ENCODE measurements at regions of chrX and their contacts with region 1.

Region 1: DNA sequence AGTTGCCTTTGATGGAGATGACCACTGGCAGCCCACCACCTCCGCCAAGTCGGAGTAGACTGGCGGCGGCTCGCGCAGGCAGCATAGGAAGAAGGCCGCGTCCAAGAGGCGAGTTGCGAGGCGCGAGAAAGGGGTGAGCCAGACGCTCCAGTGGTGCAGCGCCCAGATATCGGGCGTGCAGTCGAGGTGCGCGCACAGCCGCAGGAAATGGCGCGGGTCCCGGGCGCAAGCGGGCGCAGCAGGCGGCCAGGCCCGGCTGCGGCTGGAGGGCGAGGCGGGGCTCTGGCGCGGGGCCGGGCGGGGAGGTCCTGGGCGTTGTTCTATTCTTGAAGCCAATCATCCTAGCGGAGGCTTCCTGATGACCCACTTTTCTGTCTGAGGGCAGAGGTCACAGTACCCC is 13.2 kb upstream of the PGRMC1 start:
- DNase-seq: no peak
- H3K4me3 Mint-ChIP-seq: no peak overlapping the region
- H3K27ac Mint-ChIP-seq: no peak overlapping the region
- H3K4me1 Mint-ChIP-seq: no peaks in the 10 kb centered on the region
- H3K27me3 Mint-ChIP-seq: peaks cover 61% of the 10 kb centered on the region
- CTCF ChIP-seq: no peak

Region 2: DNA sequence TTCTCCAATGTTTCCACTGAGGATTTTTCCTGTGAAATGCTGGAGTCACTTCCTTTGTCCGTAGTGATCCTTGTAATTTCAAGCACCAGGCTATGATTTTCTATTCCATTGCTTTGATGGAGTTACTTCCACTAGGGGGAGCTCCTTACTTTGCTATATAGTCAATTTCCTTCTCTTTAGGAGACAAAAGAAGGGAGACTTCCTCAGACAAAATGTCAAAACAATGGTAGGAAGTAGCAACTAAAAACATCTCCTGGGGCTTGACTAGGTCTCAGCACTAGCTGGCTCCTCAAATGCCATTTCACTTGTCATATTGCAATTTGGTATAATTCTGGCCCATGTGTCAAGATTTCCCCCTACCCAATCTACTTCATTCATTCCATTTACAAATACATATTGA is 375.3 kb before region 1 on chrX:
- CTCF ChIA-PET with region 1: interaction called, 8 read pairs
- POLR2A ChIA-PET with region 1: no interaction called
- intact Hi-C with region 1: loop called (anchors 2 kb)
- DNase-seq: peak; percentile 68
- H3K4me3 Mint-ChIP-seq: no peak overlapping the region
- H3K27ac Mint-ChIP-seq: no peak overlapping the region
- H3K4me1 Mint-ChIP-seq: no peaks in the 10 kb centered on the region
- H3K27me3 Mint-ChIP-seq: peaks cover 36% of the 10 kb centered on the region
- CTCF ChIP-seq: peak; percentile 55

Region 3: DNA sequence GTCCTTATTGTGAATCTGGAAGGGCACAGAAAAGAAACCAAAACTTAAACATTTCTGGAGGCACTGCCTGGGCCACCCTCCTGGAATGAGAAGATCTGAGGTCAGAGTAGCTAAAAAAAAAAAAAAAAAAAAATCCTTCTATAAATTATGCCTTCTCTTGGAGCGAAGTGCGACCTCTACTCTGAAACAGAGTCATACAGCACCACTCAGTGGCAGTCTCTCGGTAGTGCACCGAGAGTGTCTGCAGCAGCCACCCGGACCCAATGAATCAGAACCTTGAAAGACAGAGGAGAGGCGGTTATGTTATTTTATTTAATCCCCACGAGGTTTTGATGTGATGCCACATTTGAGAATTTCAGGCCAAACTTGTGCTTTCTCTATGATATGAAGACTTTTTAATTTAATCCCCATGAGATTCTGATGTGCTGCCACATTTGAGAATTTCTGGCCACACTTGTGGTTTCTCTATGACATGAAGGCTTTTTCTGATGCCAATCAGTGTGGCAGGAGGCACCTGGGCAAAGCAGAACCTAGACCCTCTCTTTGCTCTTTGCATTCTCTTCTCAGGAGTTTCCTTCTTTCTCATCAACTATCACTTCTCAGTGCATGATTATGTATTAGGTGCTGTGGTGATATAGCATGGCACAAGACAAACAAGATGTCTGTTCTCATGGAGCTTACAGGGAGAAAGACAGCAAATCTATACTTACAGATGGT is 155.8 kb before region 1 on chrX:
- CTCF ChIA-PET with region 1: interaction called, 3 read pairs
- POLR2A ChIA-PET with region 1: no interaction called
- intact Hi-C with region 1: loop called (anchors 1 kb)
- DNase-seq: peak; percentile 65
- H3K4me3 Mint-ChIP-seq: no peak overlapping the region
- H3K27ac Mint-ChIP-seq: no peak overlapping the region
- H3K4me1 Mint-ChIP-seq: no peaks in the 10 kb centered on the region
- H3K27me3 Mint-ChIP-seq: peaks cover 25% of the 10 kb centered on the region
- CTCF ChIP-seq: peak; percentile 66

Region 4: GRCh38 chrX:119145241-119145653 is 77.7 kb before region 1 on chrX:
- CTCF ChIA-PET with region 1: interaction called, 8 read pairs
- POLR2A ChIA-PET with region 1: no interaction called
- intact Hi-C with region 1: loop called (anchors 1 kb)
- DNase-seq: peak; percentile 43
- H3K4me3 Mint-ChIP-seq: no peak overlapping the region
- H3K27ac Mint-ChIP-seq: no peak overlapping the region
- H3K4me1 Mint-ChIP-seq: no peaks in the 10 kb centered on the region
- H3K27me3 Mint-ChIP-seq: peaks cover 26% of the 10 kb centered on the region
- CTCF ChIP-seq: peak; percentile 43

Measured in MCF 10A (cell line).